HCT116 (cell line): ENCODE measurements at regions of chr15 and their contacts with region 1.

Region 1: DNA sequence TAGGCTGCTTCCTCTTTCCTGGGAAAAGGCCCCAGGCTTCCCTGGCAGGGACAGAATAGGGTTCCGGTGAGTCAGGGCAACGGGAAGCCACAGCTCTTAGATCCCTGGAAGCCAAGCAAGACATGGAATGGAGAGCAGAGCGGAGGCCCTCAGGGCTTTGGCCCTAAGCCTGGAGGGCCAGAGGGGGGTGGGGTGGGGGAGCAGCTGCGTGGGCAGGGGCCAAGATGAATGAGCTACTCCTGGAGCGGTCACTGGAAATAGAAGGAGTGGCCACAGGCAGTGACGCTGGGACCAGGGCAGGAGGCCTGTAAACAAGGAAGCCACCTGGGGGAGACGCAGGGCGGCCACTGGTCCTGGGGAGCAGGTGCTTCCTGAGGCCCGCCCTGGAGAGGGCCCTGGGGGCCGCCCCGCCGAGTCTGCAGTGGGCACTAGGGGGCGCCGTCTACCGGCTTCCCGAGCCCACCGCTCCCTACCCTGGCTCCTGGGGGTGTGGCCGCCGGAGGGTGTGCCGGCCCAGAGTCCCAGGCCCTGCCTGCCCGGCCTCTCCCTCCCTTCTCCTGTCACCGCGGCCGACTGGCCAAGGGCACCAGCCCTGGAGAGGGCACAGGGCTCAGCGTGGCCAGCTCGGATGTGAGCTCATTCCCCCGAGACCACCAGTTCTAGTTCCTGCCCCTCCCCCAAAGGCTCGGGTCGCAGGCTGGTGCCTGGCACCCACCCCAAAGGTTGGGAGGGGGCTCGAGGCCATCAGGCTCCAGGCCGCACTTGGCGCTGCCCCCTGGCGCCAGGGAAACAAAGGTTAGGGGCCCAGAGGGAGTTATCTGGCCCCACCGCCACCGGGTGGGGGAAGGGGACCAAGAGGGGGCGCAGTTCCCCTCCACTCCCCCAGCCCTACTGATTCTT is 12.1 kb downstream of the VPS18 start:
- DNase-seq: peak; percentile 90
- ATAC-seq: peak; percentile 90
- H3K4me3 ChIP-seq: peak overlapping the region; percentile 41 to 64
- H3K27ac ChIP-seq: peak overlapping the region; percentile 94
- H3K4me1 ChIP-seq: peaks cover 32 to 40% of the 10 kb centered on the region in 2 experiments
- H3K27me3 ChIP-seq: no peaks in the 10 kb centered on the region
- CTCF ChIP-seq: peak in 2 of 3 experiments; percentile 76 to 83; a peak in 4 of 6 replicates
- POLR2A ChIP-seq: no peak
- RAD21 ChIP-seq: no peak

Region 2: GRCh38 chr15:40835948-40836347 is 70.4 kb before region 1 on chr15:
- CTCF ChIA-PET with region 1: no interaction called
- POLR2A ChIA-PET with region 1: no interaction called
- RAD21 ChIA-PET with region 1: no interaction called
- intact Hi-C with region 1: no loop called
- DNase-seq: no peak
- ATAC-seq: no peak
- H3K4me3 ChIP-seq: no peak overlapping the region
- H3K27ac ChIP-seq: peak overlapping the region; percentile 52
- H3K4me1 ChIP-seq: peaks cover 32 to 41% of the 10 kb centered on the region in 2 experiments
- H3K27me3 ChIP-seq: no peaks in the 10 kb centered on the region
- CTCF ChIP-seq: no peak
- POLR2A ChIP-seq: no peak
- RAD21 ChIP-seq: no peak

Region 3: DNA sequence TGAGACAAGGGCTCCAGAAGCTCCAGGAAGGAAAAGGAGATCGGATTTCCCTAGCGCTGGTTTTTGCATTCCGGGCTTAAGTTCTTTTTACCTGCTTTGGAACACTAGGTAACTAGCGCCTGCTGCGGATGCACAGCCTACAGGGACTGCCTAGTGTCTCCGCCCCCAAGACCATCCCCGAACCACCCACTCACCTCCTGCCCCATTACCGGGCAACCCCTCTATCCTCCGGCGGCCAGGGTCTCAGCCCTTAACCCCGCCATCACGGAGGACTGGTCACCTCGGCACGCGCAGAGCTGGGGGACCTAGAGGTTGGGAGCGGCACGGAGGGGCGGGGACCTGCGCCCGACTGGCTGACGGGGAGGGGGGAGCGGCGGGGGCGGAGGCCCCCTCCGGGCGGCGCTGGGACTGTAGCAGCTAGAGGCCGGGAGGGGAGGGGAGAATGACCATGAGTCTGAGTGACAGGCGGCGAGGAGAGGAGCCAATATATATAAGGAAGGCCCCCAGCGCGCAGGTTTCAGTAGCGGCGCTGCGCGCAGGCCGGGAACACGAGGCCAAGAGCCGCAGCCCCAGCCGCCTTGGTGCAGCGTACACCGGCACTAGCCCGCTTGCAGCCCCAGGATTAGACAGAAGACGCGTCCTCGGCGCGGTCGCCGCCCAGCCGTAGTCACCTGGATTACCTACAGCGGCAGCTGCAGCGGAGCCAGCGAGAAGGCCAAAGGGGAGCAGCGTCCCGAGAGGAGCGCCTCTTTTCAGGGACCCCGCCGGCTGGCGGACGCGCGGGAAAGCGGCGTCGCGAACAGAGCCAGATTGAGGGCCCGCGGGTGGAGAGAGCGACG is 22.7 kb after region 1 on chr15 and contains the start of gene DLL4:
- CTCF ChIA-PET with region 1: interaction called, 69 read pairs
- POLR2A ChIA-PET with region 1: interaction called, 35 read pairs
- RAD21 ChIA-PET with region 1: interaction called, 3 to 6 read pairs
- intact Hi-C with region 1: loop called (anchors 1 kb)
- DNase-seq: peak; percentile 71
- ATAC-seq: peak; percentile 74
- H3K4me3 ChIP-seq: peak within 1 kb of the TSS; percentile 52 to 65
- H3K27ac ChIP-seq: peak within 1 kb of the TSS; percentile 22; the same call in 1 of the 2 replicates
- H3K4me1 ChIP-seq: peaks cover 19 to 41% of the 10 kb centered on the region in 2 experiments
- H3K27me3 ChIP-seq: peaks cover 15% of the 10 kb centered on the region; the same call in 1 of the 2 replicates
- CTCF ChIP-seq: no peak
- POLR2A ChIP-seq: peak; percentile 95
- RAD21 ChIP-seq: no peak
- total RNA-seq, gene DLL4: 1.5 TPM

Region 4: DNA sequence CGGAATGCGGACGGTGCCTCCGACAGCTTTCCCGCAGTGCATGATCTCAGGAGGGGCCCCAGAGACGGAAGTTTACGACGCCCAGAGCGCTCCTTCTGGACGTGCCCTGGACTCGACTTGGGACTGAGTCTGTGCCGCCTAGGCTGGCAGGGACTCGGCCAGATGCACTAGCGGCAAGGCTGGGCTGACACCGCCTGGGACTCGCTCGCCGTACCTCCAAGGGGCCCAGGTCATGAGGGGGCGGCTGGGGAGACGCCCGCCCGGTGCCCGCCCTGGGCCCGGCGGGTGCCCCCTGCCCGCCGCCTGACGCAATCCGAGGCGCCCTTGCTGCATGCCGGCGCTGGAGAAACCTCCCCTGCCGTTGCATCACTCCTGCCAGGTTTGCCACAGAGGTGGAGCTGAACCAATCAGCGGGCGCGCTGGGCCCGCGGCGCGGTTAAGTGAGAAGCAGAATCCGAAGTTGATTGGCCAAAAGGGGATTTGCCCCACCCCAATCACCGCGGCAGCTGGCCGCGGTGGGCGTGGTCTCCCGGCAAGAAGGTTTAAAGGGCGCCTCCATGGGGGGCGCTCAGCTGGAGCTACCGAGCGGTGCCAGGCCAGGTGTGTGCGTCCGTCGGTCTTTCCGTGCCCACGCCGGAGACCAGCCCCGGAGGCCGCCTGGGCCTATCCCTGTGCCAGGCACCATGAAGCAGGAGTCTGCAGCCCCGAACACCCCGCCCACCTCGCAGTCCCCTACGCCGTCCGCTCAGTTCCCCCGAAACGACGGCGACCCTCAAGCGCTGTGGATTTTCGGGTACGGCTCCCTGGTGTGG is 46.8 kb after region 1 on chr15 and contains the start of gene CHAC1:
- CTCF ChIA-PET with region 1: interaction called, 14 read pairs
- POLR2A ChIA-PET with region 1: interaction called, 6 read pairs
- RAD21 ChIA-PET with region 1: interaction called in 1 of 2 experiments, 3 read pairs
- intact Hi-C with region 1: no loop called
- DNase-seq: peak; percentile 94
- ATAC-seq: peak; percentile 94
- H3K4me3 ChIP-seq: peak within 1 kb of the TSS; percentile 68 to 73
- H3K27ac ChIP-seq: peak within 1 kb of the TSS; percentile 74
- H3K4me1 ChIP-seq: peaks cover 9 to 23% of the 10 kb centered on the region in 2 experiments; a peak in 2 of 4 replicates
- H3K27me3 ChIP-seq: no peaks in the 10 kb centered on the region
- CTCF ChIP-seq: no peak
- POLR2A ChIP-seq: peak; percentile 86
- RAD21 ChIP-seq: no peak
- total RNA-seq, gene CHAC1: 58.9 TPM

Region 5: GRCh38 chr15:41031232-41032078 is 125.1 kb after region 1 on chr15:
- CTCF ChIA-PET with region 1: interaction called, 10 read pairs
- POLR2A ChIA-PET with region 1: no interaction called
- RAD21 ChIA-PET with region 1: no interaction called
- intact Hi-C with region 1: no loop called
- DNase-seq: no peak
- ATAC-seq: no peak
- H3K4me3 ChIP-seq: no peak overlapping the region
- H3K27ac ChIP-seq: no peak overlapping the region
- H3K4me1 ChIP-seq: no peaks in the 10 kb centered on the region
- H3K27me3 ChIP-seq: no peaks in the 10 kb centered on the region
- CTCF ChIP-seq: no peak
- POLR2A ChIP-seq: no peak
- RAD21 ChIP-seq: no peak

Region 6: GRCh38 chr15:41331833-41332787 is 425.8 kb after region 1 on chr15 and contains the start of gene OIP5:
- CTCF ChIA-PET with region 1: interaction called, 3 read pairs
- POLR2A ChIA-PET with region 1: interaction called, 3 read pairs
- RAD21 ChIA-PET with region 1: no interaction called
- intact Hi-C with region 1: loop called (anchors 2 kb)
- DNase-seq: peak; percentile 99
- ATAC-seq: peak; percentile 95
- H3K4me3 ChIP-seq: peak within 1 kb of the TSS; percentile 91 to 96
- H3K27ac ChIP-seq: peak within 1 kb of the TSS; percentile 93
- H3K4me1 ChIP-seq: peaks cover 15 to 23% of the 10 kb centered on the region in 2 experiments
- H3K27me3 ChIP-seq: no peaks in the 10 kb centered on the region
- CTCF ChIP-seq: peak; percentile 56 to 61 (median 60); a peak in 5 of 6 replicates
- POLR2A ChIP-seq: peak; percentile 98
- RAD21 ChIP-seq: peak; percentile 71
- total RNA-seq, gene OIP5: 19.7 TPM